ENCODE measurements at regions of chr2 and their contacts with region 1.

Region 1: DNA sequence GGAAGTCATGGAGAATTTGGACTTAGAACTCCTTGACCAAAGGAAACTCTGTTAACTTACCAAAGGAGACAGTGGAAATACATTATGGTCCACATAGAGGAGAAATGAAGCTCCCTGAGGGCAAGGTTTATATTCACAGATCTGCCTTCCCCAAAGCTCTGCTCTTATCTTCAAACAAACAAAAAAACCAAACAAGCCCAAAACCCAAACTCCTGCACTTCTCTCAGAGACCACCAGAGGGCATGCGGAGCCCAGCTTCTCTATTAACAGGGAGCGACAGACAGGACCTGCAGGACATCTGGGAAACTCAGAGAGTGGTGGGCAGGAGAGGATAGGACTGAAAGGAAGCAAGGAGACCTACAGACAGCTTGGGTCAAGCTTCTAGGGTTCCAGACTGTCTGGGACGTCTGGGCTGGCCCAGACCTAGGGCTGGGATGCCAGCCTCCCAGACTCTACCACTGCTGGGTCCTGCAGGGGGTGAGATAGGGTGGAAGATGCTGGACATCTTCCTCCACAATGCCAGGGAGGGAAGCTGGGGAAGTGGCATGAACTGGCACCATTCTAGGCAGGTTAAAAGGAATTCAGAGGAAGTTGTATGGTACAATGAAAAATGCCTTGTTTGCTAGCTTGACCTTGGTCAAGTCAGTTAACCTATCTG is 4.0 kb upstream of the WNT10A start:
- DNase-seq: peak in 8 of 9 donors; percentile 53 to 85 (median 74)
- ATAC-seq: peak; percentile 24
- H3K4me3 ChIP-seq: no peak overlapping the region
- H3K4me3 Mint-ChIP-seq: peak overlapping the region in 3 of 10 donors; percentile 1 to 19 (median 3)
- H3K27ac ChIP-seq: no peak overlapping the region
- H3K27ac Mint-ChIP-seq: peak overlapping the region in 3 of 9 donors; percentile 48 to 53 (median 52)
- H3K4me1 ChIP-seq: peaks cover 26 to 42% of the 10 kb centered on the region in 2 donors
- H3K4me1 Mint-ChIP-seq: peaks cover 24 to 53% (median 43%) of the 10 kb centered on the region in 7 donors
- H3K27me3 ChIP-seq: peaks cover 8 to 18% of the 10 kb centered on the region in 2 donors
- H3K27me3 Mint-ChIP-seq: peaks cover 18 to 77% (median 29%) of the 10 kb centered on the region in 5 donors

Region 2: GRCh38 chr2:218387374-218388194 is 489.1 kb before region 1 on chr2:
- CTCF ChIA-PET with region 1: no interaction called
- POLR2A ChIA-PET with region 1: no interaction called
- intact Hi-C with region 1: no loop called
- DNase-seq: peak in 6 of 9 donors; percentile 37 to 70 (median 56)
- ATAC-seq: peak; percentile 61
- H3K4me3 ChIP-seq: no peak overlapping the region
- H3K4me3 Mint-ChIP-seq: peak overlapping the region; percentile 32 to 72 (median 64)
- H3K27ac ChIP-seq: no peak overlapping the region
- H3K27ac Mint-ChIP-seq: peak overlapping the region in 6 of 9 donors; percentile 31 to 95 (median 68)
- H3K4me1 ChIP-seq: no peaks in the 10 kb centered on the region
- H3K4me1 Mint-ChIP-seq: peaks cover 4 to 7% (median 6%) of the 10 kb centered on the region in 7 donors
- H3K27me3 ChIP-seq: no peaks in the 10 kb centered on the region
- H3K27me3 Mint-ChIP-seq: peaks cover 0 to 12% (median 0%) of the 10 kb centered on the region in 5 donors

Region 3: GRCh38 chr2:218892693-218893348 is 16.1 kb after region 1 on chr2:
- CTCF ChIA-PET with region 1: interaction called, 627 read pairs
- POLR2A ChIA-PET with region 1: interaction called, 305 read pairs
- intact Hi-C with region 1: loop called (anchors 1 kb)
- DNase-seq: peak; percentile 82 to 93 (median 91)
- ATAC-seq: peak; percentile 78
- H3K4me3 ChIP-seq: peak overlapping the region; percentile 48
- H3K4me3 Mint-ChIP-seq: peak overlapping the region; percentile 58 to 85 (median 75)
- H3K27ac ChIP-seq: peak overlapping the region; percentile 89
- H3K27ac Mint-ChIP-seq: peak overlapping the region; percentile 59 to 96 (median 89)
- H3K4me1 ChIP-seq: peaks cover 53 to 54% of the 10 kb centered on the region in 2 donors
- H3K4me1 Mint-ChIP-seq: peaks cover 38 to 56% (median 52%) of the 10 kb centered on the region in 7 donors
- H3K27me3 ChIP-seq: no peaks in the 10 kb centered on the region
- H3K27me3 Mint-ChIP-seq: peaks cover 0 to 76% (median 0%) of the 10 kb centered on the region in 5 donors

Region 4: DNA sequence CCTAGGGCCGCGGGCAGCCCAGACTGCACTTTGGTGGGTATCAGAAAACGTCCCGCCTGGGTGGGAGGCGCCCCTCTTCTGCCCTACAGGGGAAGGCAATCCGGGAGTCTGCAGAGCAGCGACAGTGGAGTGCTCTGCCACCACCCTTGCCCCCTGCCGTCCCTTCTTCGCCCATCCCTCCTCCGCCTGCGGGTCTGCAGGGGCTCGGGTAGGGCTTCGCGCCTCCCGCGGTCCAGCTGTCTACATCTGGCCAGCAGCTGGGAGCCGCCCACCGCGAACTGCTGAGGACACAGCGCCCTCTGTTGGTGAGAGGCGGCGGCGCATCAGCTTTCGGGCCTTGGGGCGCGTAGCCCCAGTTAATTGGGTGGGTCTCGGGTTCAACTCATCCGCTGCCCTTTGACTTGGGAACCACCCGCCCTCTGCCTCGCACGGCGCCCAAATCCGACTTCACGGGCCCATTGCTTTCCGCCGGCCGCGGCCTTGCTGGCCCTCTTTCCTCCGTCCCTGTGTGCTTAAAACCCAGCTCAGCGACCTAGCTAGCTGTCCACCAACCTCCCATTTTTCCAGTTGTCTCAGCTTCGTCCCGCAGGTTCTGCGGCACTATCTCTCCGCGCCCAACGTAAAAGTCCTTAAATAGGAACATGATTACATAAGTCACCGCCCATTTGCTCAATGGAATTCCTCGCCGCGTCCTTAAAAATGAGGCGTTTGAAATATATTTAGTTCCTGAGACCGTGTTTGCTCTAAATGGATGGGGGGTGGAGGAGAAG is 21.6 kb after region 1 on chr2:
- CTCF ChIA-PET with region 1: interaction called, 627 read pairs
- POLR2A ChIA-PET with region 1: interaction called, 305 read pairs
- intact Hi-C with region 1: loop called (anchors 1 kb)
- DNase-seq: peak; percentile 50 to 88 (median 72)
- ATAC-seq: peak; percentile 42
- H3K4me3 ChIP-seq: peak overlapping the region; percentile 65
- H3K4me3 Mint-ChIP-seq: peak overlapping the region; percentile 53 to 87 (median 82)
- H3K27ac ChIP-seq: no peak overlapping the region
- H3K27ac Mint-ChIP-seq: peak overlapping the region in 7 of 9 donors; percentile 33 to 92 (median 71)
- H3K4me1 ChIP-seq: peaks cover 40 to 49% of the 10 kb centered on the region in 2 donors
- H3K4me1 Mint-ChIP-seq: peaks cover 38 to 48% (median 42%) of the 10 kb centered on the region in 7 donors
- H3K27me3 ChIP-seq: peaks cover 0 to 3% of the 10 kb centered on the region in 2 donors
- H3K27me3 Mint-ChIP-seq: peaks cover 20 to 75% (median 40%) of the 10 kb centered on the region in 5 donors

Region 5: GRCh38 chr2:218908721-218909619 is 32.3 kb after region 1 on chr2:
- CTCF ChIA-PET with region 1: interaction called, 627 read pairs
- POLR2A ChIA-PET with region 1: no interaction called
- intact Hi-C with region 1: loop called (anchors 1 to 5 kb)
- DNase-seq: peak; percentile 78 to 89 (median 86)
- ATAC-seq: peak; percentile 98
- H3K4me3 ChIP-seq: peak overlapping the region; percentile 65
- H3K4me3 Mint-ChIP-seq: peak overlapping the region; percentile 82 to 94 (median 86)
- H3K27ac ChIP-seq: peak overlapping the region; percentile 53
- H3K27ac Mint-ChIP-seq: peak overlapping the region in 8 of 9 donors; percentile 10 to 88 (median 80)
- H3K4me1 ChIP-seq: peaks cover 10 to 12% of the 10 kb centered on the region in 2 donors
- H3K4me1 Mint-ChIP-seq: peaks cover 0 to 12% (median 6%) of the 10 kb centered on the region in 7 donors
- H3K27me3 ChIP-seq: no peaks in the 10 kb centered on the region
- H3K27me3 Mint-ChIP-seq: peaks cover 14 to 38% (median 16%) of the 10 kb centered on the region in 5 donors

Region 6: GRCh38 chr2:218962859-218963492 is 86.3 kb after region 1 on chr2:
- CTCF ChIA-PET with region 1: interaction called, 3 read pairs
- POLR2A ChIA-PET with region 1: interaction called, 5 read pairs
- intact Hi-C with region 1: loop called in 1 of 2 experiments (anchors 5 kb)
- DNase-seq: peak in 7 of 9 donors; percentile 46 to 71 (median 57)
- ATAC-seq: no peak
- H3K4me3 ChIP-seq: no peak overlapping the region
- H3K4me3 Mint-ChIP-seq: peak overlapping the region in 1 of 10 donors; percentile 6
- H3K27ac ChIP-seq: no peak overlapping the region
- H3K27ac Mint-ChIP-seq: no peak overlapping the region
- H3K4me1 ChIP-seq: peaks cover 3 to 8% of the 10 kb centered on the region in 2 donors
- H3K4me1 Mint-ChIP-seq: peaks cover 6 to 26% (median 13%) of the 10 kb centered on the region in 7 donors
- H3K27me3 ChIP-seq: peaks cover 17 to 37% of the 10 kb centered on the region in 2 donors
- H3K27me3 Mint-ChIP-seq: peaks cover 65 to 74% (median 69%) of the 10 kb centered on the region in 5 donors

Region 7: GRCh38 chr2:218979846-218980734 is 103.4 kb after region 1 on chr2:
- CTCF ChIA-PET with region 1: no interaction called
- POLR2A ChIA-PET with region 1: no interaction called
- intact Hi-C with region 1: loop called (anchors 1 to 5 kb)
- DNase-seq: peak; percentile 65 to 85 (median 81)
- ATAC-seq: peak; percentile 93
- H3K4me3 ChIP-seq: peak overlapping the region; percentile 53
- H3K4me3 Mint-ChIP-seq: peak overlapping the region; percentile 66 to 94 (median 73)
- H3K27ac ChIP-seq: no peak overlapping the region
- H3K27ac Mint-ChIP-seq: peak overlapping the region in 1 of 9 donors; percentile 58
- H3K4me1 ChIP-seq: peaks cover 13 to 23% of the 10 kb centered on the region in 2 donors
- H3K4me1 Mint-ChIP-seq: peaks cover 14 to 40% (median 20%) of the 10 kb centered on the region in 7 donors
- H3K27me3 ChIP-seq: peaks cover 17 to 35% of the 10 kb centered on the region in 2 donors
- H3K27me3 Mint-ChIP-seq: peaks cover 60 to 80% (median 70%) of the 10 kb centered on the region in 5 donors

Measured in naive thymus-derived CD4-positive, alpha-beta T cell (primary cell).